ENCODE measurements at regions of chr17 and their contacts with region 1.

Region 1: DNA sequence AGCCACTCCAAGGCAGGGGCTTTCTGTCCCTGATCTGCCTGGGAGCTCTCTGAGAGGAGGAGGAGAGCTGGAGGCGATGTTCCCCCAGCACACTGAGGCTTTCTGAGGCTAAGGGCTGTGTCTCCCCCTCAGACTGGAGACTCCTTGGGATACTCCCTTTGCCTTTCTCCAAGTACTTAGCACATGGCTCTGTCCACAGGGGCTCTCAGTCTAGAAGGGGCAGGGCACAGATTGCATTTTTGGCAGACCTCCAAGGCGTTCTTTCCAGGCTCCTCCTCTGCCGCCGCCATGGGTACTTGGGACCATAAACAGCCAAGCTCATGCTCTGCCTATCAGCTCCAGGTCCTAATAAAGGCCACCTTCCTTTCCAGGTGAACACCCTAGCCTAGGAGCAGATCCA is 1.8 kb upstream of the GIP start:
- DNase-seq: no peak
- ATAC-seq: no peak
- H3K4me3 ChIP-seq: no peak overlapping the region
- H3K27ac ChIP-seq: no peak overlapping the region
- H3K4me1 ChIP-seq: peaks cover 22% of the 10 kb centered on the region
- H3K27me3 ChIP-seq: no peaks in the 10 kb centered on the region
- CTCF ChIP-seq: no peak
- POLR2A ChIP-seq: no peak
- RAD21 ChIP-seq: no peak

Region 2: GRCh38 chr17:48577946-48578615 is 392.1 kb before region 1 on chr17 and contains the start of gene HOXB4:
- CTCF ChIA-PET with region 1: no interaction called
- POLR2A ChIA-PET with region 1: no interaction called
- dilution Hi-C with region 1: no loop called
- in situ Hi-C with region 1: no loop called
- intact Hi-C with region 1: no loop called
- DNase-seq: peak; percentile 88
- ATAC-seq: peak; percentile 25
- H3K4me3 ChIP-seq: peak within 1 kb of the TSS; percentile 69
- H3K27ac ChIP-seq: peak within 1 kb of the TSS; percentile 99
- H3K4me1 ChIP-seq: peaks cover 9% of the 10 kb centered on the region
- H3K27me3 ChIP-seq: no peaks in the 10 kb centered on the region
- CTCF ChIP-seq: no peak
- POLR2A ChIP-seq: no peak
- RAD21 ChIP-seq: no peak
- total RNA-seq, gene HOXB4: 1.9 and 2.0 TPM in 2 replicates

Region 3: DNA sequence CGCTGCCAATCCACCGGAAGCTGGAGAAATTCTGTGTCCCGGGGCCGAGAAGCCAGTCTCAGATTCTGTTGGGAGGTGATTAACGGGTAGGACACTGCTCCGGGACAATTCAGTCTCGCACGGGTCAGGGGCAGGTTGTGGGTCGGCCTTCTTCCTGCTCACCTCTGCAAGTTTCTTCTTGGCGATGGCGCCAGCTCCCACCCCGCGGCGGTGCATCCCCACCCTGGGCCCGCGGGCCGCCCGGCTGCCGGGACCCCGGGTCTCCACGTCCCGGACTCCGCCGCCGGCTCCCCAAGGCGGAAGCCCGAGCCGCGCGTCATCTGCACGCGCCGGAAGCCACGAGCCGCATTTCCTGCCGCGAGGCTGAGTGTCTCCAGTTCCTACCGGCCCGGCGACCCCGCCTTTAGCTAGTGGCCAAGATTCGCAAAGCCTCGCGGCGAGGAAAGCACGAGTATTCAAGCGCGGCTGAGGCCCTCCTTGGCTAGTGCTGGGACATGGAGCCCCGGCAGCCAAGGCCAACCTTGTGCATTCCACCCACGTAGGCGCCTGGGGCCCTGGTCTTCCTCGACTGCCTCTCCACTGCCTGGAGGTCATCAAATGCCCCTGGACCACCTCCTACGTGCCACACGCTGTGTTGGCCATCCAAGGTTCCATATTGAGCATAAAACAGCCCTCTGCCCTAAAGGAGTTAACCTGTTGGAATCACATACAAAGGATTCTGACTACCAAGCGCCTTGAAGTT is 25.5 kb before region 1 on chr17 and contains the start of gene SNF8:
- CTCF ChIA-PET with region 1: no interaction called
- POLR2A ChIA-PET with region 1: no interaction called
- dilution Hi-C with region 1: no loop called
- in situ Hi-C with region 1: no loop called
- intact Hi-C with region 1: loop called (anchors 1 kb)
- DNase-seq: peak; percentile 88
- ATAC-seq: peak; percentile 98
- H3K4me3 ChIP-seq: peak within 1 kb of the TSS; percentile 88
- H3K27ac ChIP-seq: peak within 1 kb of the TSS; percentile 98
- H3K4me1 ChIP-seq: peaks cover 8% of the 10 kb centered on the region
- H3K27me3 ChIP-seq: no peaks in the 10 kb centered on the region
- CTCF ChIP-seq: no peak
- POLR2A ChIP-seq: peak; percentile 91
- RAD21 ChIP-seq: no peak
- total RNA-seq, gene SNF8: 171 and 191 TPM in 2 replicates

Region 4: DNA sequence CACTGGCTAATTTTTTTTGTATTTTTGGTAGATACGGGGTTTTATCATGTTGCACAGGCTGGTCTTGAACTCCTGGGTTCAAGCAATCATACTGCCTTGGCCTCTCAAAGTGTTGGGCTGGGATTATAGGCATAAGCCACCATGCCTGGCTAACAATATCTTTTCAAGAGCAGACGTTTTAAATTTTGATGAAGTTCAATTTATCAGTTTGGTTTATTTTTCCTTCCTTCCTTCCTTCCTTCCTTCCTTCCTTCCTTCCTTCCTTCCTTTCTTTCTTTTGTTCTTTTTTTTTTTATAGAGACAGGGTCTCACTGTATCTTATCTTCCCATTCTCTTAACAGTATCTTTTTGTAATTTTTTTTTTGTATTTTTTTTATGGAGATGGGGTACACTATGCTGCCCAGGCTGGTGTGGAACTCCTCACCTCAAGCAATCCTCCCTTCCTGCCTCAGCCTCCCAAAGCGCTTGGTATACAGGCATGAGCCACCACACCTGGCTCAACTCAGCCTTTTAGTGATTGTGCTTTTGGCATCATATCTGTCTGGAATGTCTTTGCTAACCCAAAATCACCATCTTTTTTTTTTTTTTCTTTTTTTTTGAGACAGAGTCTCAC is 11.8 kb after region 1 on chr17:
- CTCF ChIA-PET with region 1: no interaction called
- POLR2A ChIA-PET with region 1: no interaction called
- dilution Hi-C with region 1: no loop called
- in situ Hi-C with region 1: no loop called
- intact Hi-C with region 1: no loop called
- DNase-seq: no peak
- ATAC-seq: no peak
- H3K4me3 ChIP-seq: no peak overlapping the region
- H3K27ac ChIP-seq: no peak overlapping the region
- H3K4me1 ChIP-seq: no peaks in the 10 kb centered on the region
- H3K27me3 ChIP-seq: peaks cover 12% of the 10 kb centered on the region
- CTCF ChIP-seq: no peak
- POLR2A ChIP-seq: no peak
- RAD21 ChIP-seq: no peak

Region 5: DNA sequence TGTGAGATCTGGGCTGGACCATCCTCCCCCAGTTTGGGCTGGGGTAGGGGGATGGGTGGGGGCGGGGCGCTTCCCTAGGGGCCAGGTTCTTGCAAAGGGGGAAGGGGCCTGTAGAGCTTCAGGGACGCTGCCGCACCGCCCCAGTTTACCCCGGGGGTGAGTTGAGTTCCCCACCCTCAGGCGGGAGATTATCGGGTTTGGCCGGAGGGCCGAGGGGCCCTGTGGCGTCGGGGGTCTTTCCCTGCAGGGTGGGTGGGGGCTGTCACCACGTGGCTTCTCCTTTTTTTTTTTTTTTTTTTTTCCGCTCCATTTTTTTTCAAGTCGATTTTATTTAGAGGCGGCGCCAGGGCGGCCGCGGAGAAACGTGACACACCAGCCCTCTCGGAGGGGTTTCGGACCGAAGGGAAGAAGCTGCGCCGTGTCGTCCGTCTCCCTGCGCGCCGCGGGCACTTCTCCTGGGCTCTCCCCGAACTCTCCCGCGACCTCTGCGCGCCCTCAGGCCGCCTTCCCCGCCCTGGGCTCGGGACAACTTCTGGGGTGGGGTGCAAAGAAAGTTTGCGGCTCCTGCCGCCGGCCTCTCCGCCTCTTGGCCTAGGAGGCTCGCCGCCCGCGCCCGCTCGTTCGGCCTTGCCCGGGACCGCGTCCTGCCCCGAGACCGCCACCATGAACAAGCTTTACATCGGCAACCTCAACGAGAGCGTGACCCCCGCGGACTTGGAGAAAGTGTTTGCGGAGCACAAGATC is 27.0 kb after region 1 on chr17 and contains the start of gene IGF2BP1:
- CTCF ChIA-PET with region 1: interaction called, 3 read pairs
- POLR2A ChIA-PET with region 1: interaction called, 27 read pairs
- dilution Hi-C with region 1: no loop called
- in situ Hi-C with region 1: no loop called
- intact Hi-C with region 1: loop called (anchors 2 kb)
- DNase-seq: peak; percentile 78
- ATAC-seq: peak; percentile 50
- H3K4me3 ChIP-seq: peak within 1 kb of the TSS; percentile 93
- H3K27ac ChIP-seq: peak within 1 kb of the TSS; percentile 95
- H3K4me1 ChIP-seq: no peaks in the 10 kb centered on the region
- H3K27me3 ChIP-seq: peaks cover 20% of the 10 kb centered on the region
- CTCF ChIP-seq: no peak
- POLR2A ChIP-seq: no peak
- RAD21 ChIP-seq: no peak
- total RNA-seq, gene IGF2BP1: 10.2 and 11.9 TPM in 2 replicates

Region 6: GRCh38 chr17:49022391-49022941 is 52.2 kb after region 1 on chr17:
- CTCF ChIA-PET with region 1: interaction called, 3 read pairs
- POLR2A ChIA-PET with region 1: no interaction called
- dilution Hi-C with region 1: no loop called
- in situ Hi-C with region 1: no loop called
- intact Hi-C with region 1: loop called (anchors 2 kb)
- DNase-seq: peak; percentile 49
- ATAC-seq: peak; percentile 91
- H3K4me3 ChIP-seq: no peak overlapping the region
- H3K27ac ChIP-seq: peak overlapping the region; percentile 82
- H3K4me1 ChIP-seq: peaks cover 22% of the 10 kb centered on the region
- H3K27me3 ChIP-seq: no peaks in the 10 kb centered on the region
- CTCF ChIP-seq: no peak
- POLR2A ChIP-seq: no peak
- RAD21 ChIP-seq: no peak